BJ (cell line): ENCODE measurements at regions of chr5 and their contacts with region 1.

Region 1: DNA sequence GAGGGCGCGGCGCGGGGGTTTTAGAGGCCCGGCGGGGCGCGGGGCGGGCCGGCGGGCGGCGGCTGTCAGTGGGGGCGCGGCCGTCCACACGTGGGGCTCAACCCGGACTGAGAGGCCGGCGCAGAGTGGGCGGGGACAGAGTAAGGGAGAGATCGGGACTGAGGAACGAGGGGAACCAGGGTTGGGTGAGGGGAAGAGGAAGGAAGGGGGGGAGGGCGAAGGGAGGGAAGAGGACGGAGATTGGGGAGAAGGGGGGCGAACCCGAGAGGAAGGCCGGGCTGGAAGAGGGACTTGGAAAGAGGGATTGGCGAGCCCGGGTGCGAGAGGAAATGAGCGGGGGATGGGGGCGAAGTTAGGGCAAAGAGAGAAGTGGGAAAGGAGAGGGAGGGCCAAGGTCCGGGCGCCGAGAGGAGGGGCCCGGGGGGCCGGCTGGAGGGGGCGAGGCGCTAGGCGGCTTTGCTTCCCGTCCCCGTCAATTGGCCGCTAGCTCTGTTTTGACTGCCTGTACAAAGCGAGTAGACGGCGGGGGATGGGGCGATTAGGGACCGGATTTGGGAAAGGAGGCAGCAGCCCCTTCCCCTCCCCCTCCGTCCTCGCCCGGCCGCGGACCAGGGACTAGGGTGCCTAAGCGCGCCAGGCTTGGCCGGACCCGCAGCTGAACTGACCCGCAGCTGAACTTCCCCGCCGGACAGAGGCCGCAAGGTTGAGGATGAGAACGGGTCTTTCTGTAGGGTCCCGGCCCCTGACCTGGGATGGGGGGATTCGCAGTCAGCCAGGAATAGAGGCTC is 399 bp upstream of the FBN2 start:
- DNase-seq: peak; percentile 50
- H3K4me3 ChIP-seq: peak overlapping the region; percentile 79
- H3K27me3 ChIP-seq: no peaks in the 10 kb centered on the region
- CTCF ChIP-seq: no peak

Region 2: GRCh38 chr5:128163991-128164390 is 374.5 kb before region 1 on chr5:
- CTCF ChIA-PET with region 1: no interaction called
- POLR2A ChIA-PET with region 1: no interaction called
- DNase-seq: no peak
- H3K4me3 ChIP-seq: no peak overlapping the region
- H3K27me3 ChIP-seq: no peaks in the 10 kb centered on the region
- CTCF ChIP-seq: no peak

Region 3: DNA sequence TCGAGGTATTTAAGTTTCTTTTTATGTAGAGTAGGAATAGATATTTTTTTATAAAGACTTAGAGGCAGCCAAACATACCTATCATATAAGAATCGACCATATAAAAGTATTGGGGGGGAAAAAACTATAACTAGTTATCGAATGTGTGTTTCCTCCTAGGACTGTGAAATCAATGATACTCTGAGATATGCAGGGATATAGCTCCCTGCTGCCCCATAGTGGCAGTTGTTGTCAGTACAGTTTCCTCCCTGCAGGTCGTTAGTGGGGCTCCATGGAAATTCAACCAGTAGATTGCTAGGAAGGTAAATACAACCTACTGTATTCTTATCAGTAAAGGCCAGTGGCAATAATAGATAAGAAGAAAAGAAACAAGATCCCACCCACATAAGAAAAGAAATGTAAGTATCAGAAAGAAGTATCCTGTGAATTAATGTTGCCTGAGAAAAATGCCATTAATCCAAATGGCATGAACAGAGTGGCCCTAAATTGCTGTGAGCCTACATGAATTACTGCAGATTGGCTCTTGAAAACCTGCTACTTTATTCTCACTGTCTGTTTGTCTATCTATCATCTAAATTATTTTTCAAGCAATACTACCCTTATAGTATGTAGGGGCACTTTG is 136.5 kb after region 1 on chr5:
- CTCF ChIA-PET with region 1: interaction called, 19 read pairs
- POLR2A ChIA-PET with region 1: no interaction called
- DNase-seq: no peak
- H3K4me3 ChIP-seq: no peak overlapping the region
- H3K27me3 ChIP-seq: no peaks in the 10 kb centered on the region
- CTCF ChIP-seq: peak; percentile 83

Region 4: GRCh38 chr5:128711216-128711615 is 172.8 kb after region 1 on chr5:
- CTCF ChIA-PET with region 1: no interaction called
- POLR2A ChIA-PET with region 1: no interaction called
- DNase-seq: no peak
- H3K4me3 ChIP-seq: no peak overlapping the region
- H3K27me3 ChIP-seq: no peaks in the 10 kb centered on the region
- CTCF ChIP-seq: no peak